ENCODE measurements at regions of chr1 and their contacts with region 1.

Region 1: GRCh38 chr1:203504397-203505250 is 10.7 kb downstream of the OPTC start:
- DNase-seq: peak; percentile 96
- H3K4me3 Mint-ChIP-seq: no peak overlapping the region
- H3K27ac Mint-ChIP-seq: no peak overlapping the region
- H3K4me1 Mint-ChIP-seq: peaks cover 22% of the 10 kb centered on the region
- H3K27me3 Mint-ChIP-seq: peaks cover 22% of the 10 kb centered on the region
- CTCF ChIP-seq: peak; percentile 94

Region 2: DNA sequence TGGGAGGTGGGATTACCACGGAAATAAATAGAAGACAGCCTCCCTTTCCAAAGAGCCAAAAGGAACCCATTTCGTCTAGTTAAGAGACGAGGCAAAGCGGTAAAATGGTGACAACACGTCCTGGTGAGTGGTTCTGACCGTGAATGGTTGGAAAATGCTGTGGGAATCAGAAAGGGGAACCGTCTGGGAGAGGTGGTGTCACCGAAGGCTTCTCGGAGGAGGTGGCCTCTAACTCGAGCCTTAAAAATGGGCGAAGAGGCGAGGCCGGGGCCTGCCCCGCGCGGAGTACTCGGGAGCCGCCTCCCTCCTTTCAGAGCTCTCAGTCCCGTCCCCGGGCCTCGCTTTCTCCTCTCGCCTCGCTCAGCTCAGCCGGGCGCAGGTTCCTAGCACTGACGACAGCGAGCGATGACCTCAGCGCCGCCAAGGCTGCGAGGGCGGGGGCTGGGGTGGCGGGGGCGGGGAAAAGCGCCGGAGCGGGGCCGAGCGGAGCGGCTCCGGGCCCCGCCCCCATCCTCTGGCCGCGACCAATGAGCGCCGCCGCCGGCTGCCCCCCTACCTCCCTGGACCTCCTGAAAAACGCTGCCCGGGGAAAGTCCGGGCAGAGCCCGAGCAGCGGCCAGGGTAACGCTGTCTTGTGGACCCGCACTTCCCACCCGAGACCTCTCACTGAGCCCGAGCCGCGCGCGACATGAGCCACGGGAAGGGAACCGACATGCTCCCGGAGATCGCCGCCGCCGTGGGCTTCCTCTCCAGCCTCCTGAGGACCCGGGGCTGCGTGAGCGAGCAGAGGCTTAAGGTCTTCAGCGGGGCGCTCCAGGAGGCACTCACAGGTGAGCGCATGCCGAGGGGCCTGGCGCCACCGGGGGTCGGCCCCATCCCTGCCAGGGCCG is 199.5 kb before region 1 on chr1 and contains the start of gene BTG2:
- CTCF ChIA-PET with region 1: interaction called, 11 read pairs
- POLR2A ChIA-PET with region 1: interaction called, 3 read pairs
- intact Hi-C with region 1: no loop called
- DNase-seq: peak; percentile 96
- H3K4me3 Mint-ChIP-seq: peak within 1 kb of the TSS; percentile 71
- H3K27ac Mint-ChIP-seq: peak within 1 kb of the TSS; percentile 6
- H3K4me1 Mint-ChIP-seq: peaks cover 48% of the 10 kb centered on the region
- H3K27me3 Mint-ChIP-seq: no peaks in the 10 kb centered on the region
- CTCF ChIP-seq: no peak
- total RNA-seq, gene BTG2: 39.8 and 44.4 TPM in 2 replicates

Region 3: GRCh38 chr1:203492748-203493130 is 11.9 kb before region 1 on chr1:
- CTCF ChIA-PET with region 1: interaction called, 65 read pairs
- POLR2A ChIA-PET with region 1: no interaction called
- intact Hi-C with region 1: no loop called
- DNase-seq: no peak
- H3K4me3 Mint-ChIP-seq: no peak overlapping the region
- H3K27ac Mint-ChIP-seq: no peak overlapping the region
- H3K4me1 Mint-ChIP-seq: no peaks in the 10 kb centered on the region
- H3K27me3 Mint-ChIP-seq: peaks cover 24% of the 10 kb centered on the region
- CTCF ChIP-seq: no peak

Region 4: GRCh38 chr1:203663294-203663693 is 158.7 kb after region 1 on chr1:
- CTCF ChIA-PET with region 1: interaction called, 18 read pairs
- POLR2A ChIA-PET with region 1: no interaction called
- intact Hi-C with region 1: loop called (anchors 1 kb)
- DNase-seq: peak; percentile 98
- H3K4me3 Mint-ChIP-seq: peak overlapping the region; percentile 3
- H3K27ac Mint-ChIP-seq: peak overlapping the region; percentile 58
- H3K4me1 Mint-ChIP-seq: peaks cover 34% of the 10 kb centered on the region
- H3K27me3 Mint-ChIP-seq: no peaks in the 10 kb centered on the region
- CTCF ChIP-seq: no peak

Region 5: DNA sequence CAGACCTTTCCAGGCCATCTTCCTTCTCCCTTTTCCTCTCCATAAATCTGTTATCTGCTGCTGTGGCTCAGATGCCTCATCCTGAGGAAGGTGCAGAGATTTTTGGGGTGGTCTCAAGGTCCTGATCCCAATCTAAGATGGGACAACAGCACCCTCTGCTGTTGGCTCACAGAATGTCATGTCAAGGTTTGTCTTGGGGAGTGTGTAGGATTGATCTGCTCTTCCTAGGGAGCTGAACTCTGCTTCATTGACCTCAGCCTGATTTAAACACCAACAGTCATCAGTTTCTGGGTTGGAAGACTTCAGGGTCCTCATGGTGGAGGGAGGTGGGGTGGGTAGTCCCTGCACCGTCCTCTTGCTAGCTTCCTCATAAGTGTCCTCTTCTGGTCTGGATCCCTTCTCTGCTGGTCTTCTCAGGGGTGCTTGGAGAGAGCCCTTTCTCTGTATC is 197.5 kb after region 1 on chr1:
- CTCF ChIA-PET with region 1: interaction called, 552 read pairs
- POLR2A ChIA-PET with region 1: interaction called, 36 read pairs
- intact Hi-C with region 1: loop called (anchors 1 kb)
- DNase-seq: peak; percentile 83
- H3K4me3 Mint-ChIP-seq: no peak overlapping the region
- H3K27ac Mint-ChIP-seq: no peak overlapping the region
- H3K4me1 Mint-ChIP-seq: peaks cover 16% of the 10 kb centered on the region
- H3K27me3 Mint-ChIP-seq: no peaks in the 10 kb centered on the region
- CTCF ChIP-seq: peak; percentile 100

Region 6: GRCh38 chr1:203776636-203777035 is 272.0 kb after region 1 on chr1:
- CTCF ChIA-PET with region 1: interaction called, 14 read pairs
- POLR2A ChIA-PET with region 1: no interaction called
- intact Hi-C with region 1: loop called (anchors 1 kb)
- DNase-seq: peak; percentile 42
- H3K4me3 Mint-ChIP-seq: no peak overlapping the region
- H3K27ac Mint-ChIP-seq: no peak overlapping the region
- H3K4me1 Mint-ChIP-seq: no peaks in the 10 kb centered on the region
- H3K27me3 Mint-ChIP-seq: no peaks in the 10 kb centered on the region
- CTCF ChIP-seq: peak; percentile 26

Region 7: DNA sequence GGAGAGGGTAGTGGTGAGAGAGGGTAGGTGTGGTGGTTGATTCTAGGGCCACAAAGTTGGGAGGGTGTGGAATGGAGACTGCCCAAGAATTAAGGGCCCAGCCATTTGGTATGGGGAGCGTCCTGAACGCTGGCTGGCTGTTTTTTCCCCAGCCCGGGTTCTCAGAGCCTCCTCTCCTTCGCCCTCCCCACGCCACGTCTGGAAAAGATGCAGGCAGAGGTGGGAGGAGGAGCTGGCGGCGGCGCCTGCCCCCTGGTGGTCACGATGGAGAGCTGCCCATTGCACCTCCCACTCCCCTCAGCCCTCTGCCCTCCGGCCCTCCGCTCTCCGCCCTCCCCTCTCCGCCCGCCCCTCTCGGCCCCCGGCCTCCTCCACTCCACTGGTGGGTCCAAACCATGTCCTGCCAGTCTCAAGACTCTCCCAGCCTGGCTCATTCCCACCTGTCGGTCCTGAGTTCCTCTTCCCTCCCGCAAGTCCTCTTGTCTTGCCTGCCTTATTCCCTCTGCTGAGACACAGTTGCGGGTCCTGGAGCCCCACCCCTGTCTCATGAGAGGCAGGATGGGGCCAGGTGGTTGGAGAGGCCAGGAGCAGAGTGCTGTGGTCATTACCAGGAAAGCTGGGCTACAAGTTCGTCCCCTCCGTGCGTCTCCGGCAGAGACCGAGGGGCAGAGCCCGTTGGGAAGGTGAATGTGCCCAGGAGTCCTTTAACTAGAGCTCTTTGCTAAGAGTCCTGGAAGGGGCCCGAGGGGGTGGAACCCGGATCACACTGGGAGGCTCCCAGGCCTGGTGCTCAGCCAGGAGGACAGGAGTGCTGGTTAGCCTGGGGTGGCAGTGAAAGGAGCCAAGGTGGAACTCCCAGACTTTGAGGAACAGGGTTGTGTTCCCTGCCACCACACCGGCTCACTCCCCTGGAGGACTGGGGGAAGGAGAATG is 624.6 kb after region 1 on chr1:
- CTCF ChIA-PET with region 1: interaction called, 3 read pairs
- POLR2A ChIA-PET with region 1: no interaction called
- intact Hi-C with region 1: loop called (anchors 2 kb)
- DNase-seq: peak; percentile 86
- H3K4me3 Mint-ChIP-seq: peak overlapping the region; percentile 68
- H3K27ac Mint-ChIP-seq: peak overlapping the region; percentile 63
- H3K4me1 Mint-ChIP-seq: peaks cover 58% of the 10 kb centered on the region
- H3K27me3 Mint-ChIP-seq: no peaks in the 10 kb centered on the region
- CTCF ChIP-seq: peak; percentile 100

Measured in MCF 10A (cell line).